Activated CD8-positive, alpha-beta memory T cell treated with anti-CD3 and anti-CD28 coated beads, Interleukin-2, amount 10 ng/mL, durations not matched to agents 7 days and 5 days (primary cell): ENCODE measurements at regions of chr2 and their contacts with region 1.

Region 1: GRCh38 chr2:241877989-241878970 is 8.8 kb downstream of the RTP5 start:
- DNase-seq: peak; percentile 83
- ATAC-seq: peak; percentile 26
- H3K4me3 Mint-ChIP-seq: no peak overlapping the region
- H3K27ac Mint-ChIP-seq: no peak overlapping the region
- H3K4me1 Mint-ChIP-seq: peaks cover 28% of the 10 kb centered on the region
- H3K27me3 Mint-ChIP-seq: no peaks in the 10 kb centered on the region

Region 2: GRCh38 chr2:241632478-241633325 is 245.6 kb before region 1 on chr2:
- CTCF ChIA-PET with region 1: no interaction called
- DNase-seq: no peak
- ATAC-seq: no peak
- H3K4me3 Mint-ChIP-seq: no peak overlapping the region
- H3K27ac Mint-ChIP-seq: no peak overlapping the region
- H3K4me1 Mint-ChIP-seq: peaks cover 22% of the 10 kb centered on the region
- H3K27me3 Mint-ChIP-seq: no peaks in the 10 kb centered on the region

Region 3: DNA sequence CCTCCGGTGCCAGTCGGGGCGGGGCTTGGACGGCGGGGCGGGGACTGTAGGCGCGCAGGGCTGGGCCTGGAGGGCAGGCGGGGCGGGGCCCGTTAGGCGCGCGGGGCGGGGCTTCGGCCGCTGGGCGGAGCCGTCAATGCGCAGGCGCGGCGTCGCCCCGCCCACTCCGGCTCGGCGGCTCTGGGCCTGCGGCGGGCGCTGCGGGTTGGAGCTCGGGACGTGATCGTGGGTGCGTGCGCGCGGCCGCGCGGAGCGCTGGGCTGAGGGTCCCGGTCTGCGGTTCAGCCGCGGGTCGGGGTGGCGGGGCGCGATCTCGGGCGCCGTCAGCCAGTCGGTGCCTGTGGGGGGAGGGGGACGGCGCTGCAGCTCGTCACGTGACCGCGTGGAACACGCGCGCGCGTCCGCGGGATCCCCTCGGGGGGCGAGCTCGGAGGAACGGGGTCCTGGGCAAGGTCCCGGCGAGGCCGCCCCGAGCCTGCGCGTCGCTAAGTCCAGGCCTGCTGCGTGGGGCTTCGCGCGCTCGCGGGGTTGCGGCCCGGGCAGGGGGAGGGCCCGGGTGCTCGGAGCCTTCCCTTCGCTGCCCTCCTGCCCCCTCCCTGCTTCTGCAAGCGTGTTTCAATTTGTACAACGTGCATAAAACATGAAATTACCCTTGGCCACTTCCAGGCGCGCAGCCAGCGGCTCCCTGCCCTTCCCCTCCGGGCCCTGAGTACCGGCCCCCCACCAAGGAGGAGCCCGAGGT is 143.6 kb before region 1 on chr2 and contains the start of gene D2HGDH:
- CTCF ChIA-PET with region 1: interaction called, 21 read pairs
- DNase-seq: peak; percentile 95
- ATAC-seq: peak; percentile 94
- H3K4me3 Mint-ChIP-seq: peak within 1 kb of the TSS; percentile 80
- H3K27ac Mint-ChIP-seq: peak within 1 kb of the TSS; percentile 56
- H3K4me1 Mint-ChIP-seq: peaks cover 50% of the 10 kb centered on the region
- H3K27me3 Mint-ChIP-seq: no peaks in the 10 kb centered on the region
- total RNA-seq, gene D2HGDH: 21.6 to 26.2 TPM

Region 4: GRCh38 chr2:241867776-241868420 is 10.4 kb before region 1 on chr2:
- CTCF ChIA-PET with region 1: interaction called, 19 read pairs
- DNase-seq: peak; percentile 72
- ATAC-seq: no peak
- H3K4me3 Mint-ChIP-seq: peak overlapping the region; percentile 6
- H3K27ac Mint-ChIP-seq: no peak overlapping the region
- H3K4me1 Mint-ChIP-seq: peaks cover 57% of the 10 kb centered on the region
- H3K27me3 Mint-ChIP-seq: peaks cover 62% of the 10 kb centered on the region

Region 5: DNA sequence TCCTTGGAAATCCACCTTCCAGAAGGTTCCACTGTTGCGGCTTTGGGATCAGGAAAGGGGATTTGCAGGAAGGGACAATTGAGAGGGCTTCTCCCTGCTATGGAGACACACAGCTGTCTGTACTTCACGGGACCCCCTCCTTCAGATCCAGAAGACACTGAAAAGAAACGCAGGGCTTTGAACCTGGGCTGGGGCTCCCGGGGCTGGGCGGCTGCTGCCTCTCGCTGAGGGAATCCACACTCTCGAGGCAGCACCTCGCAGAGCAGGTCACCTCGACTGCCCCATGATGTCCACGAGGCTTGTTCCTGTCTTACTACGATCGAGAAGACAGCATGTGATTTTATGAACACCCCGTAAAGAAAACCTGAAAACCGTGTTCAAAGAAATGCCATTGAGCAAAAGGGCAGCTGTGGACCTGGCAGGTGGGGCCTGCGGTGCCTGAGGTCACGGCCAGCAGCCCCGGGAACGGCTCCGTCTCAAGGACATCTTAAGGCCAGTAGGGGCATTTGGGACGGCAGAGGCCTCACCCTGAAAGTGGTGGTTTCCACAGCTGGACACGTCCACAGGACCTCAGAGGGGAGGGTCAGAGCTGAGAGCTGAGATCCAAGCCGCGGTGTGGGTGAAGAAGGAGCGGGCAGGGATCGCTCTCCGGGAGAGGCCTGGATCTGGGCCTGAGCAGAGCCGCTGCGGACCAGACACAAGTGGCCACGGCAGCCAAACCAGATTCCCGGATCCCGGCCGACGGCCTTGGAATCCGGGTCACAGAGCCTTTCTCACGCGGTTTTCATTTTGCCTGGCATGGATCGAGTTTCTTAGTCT is 156.9 kb after region 1 on chr2:
- CTCF ChIA-PET with region 1: no interaction called
- DNase-seq: no peak
- ATAC-seq: no peak
- H3K4me3 Mint-ChIP-seq: no peak overlapping the region
- H3K27ac Mint-ChIP-seq: no peak overlapping the region
- H3K4me1 Mint-ChIP-seq: peaks cover 17% of the 10 kb centered on the region
- H3K27me3 Mint-ChIP-seq: peaks cover 62% of the 10 kb centered on the region